Gastrocnemius medialis (tissue), 4 donors: ENCODE measurements at regions of chr2 and their contacts with region 1.

Region 1: DNA sequence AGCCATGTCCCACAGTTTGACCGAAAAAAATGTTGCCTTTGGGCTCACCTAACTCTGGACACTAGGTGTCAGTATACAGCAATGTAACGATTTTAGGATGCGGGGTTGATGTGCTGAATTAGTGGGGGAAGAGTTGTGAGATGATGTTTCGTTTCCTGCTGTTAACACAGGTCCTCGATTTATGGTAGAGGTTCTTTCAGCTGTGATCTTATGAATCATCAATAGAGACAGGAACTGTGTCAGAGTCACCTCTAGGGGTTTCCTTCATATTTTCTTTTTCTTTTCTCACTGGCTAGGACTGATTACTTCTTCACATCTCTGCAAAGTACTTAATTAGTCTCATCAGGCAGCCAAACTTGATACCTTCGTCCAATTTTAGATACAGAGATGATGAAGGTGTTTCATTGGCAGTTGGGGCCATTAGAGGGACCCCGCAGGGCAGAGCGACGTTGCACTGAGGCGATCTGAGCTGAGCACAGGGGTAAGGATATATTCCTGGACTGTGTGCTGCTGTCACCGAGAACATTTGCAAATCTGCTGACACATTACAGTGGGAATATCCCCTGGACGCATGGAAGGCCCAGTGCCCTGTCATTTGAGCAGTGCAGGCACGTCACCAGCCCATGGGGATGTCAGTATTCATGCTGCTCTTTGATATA is 10.2 kb upstream of the MMADHC start:
- DNase-seq: peak in 1 of 2 donors; percentile 23
- ATAC-seq: peak; percentile 92 to 96
- H3K4me3 ChIP-seq: peak overlapping the region; percentile 6 to 36 (median 26)
- H3K27ac ChIP-seq: peak overlapping the region in 1 of 4 donors; percentile 21
- H3K4me1 ChIP-seq: peaks cover 4 to 5% of the 10 kb centered on the region in 2 donors
- H3K27me3 ChIP-seq: no peaks in the 10 kb centered on the region
- CTCF ChIP-seq: peak; percentile 59 to 78 (median 73)
- POLR2A ChIP-seq: no peak

Region 2: GRCh38 chr2:149629026-149629425 is 31.2 kb after region 1 on chr2:
- in situ Hi-C with region 1: no loop called
- intact Hi-C with region 1: no loop called
- DNase-seq: no peak
- ATAC-seq: no peak
- H3K4me3 ChIP-seq: no peak overlapping the region
- H3K27ac ChIP-seq: no peak overlapping the region
- H3K4me1 ChIP-seq: no peaks in the 10 kb centered on the region
- H3K27me3 ChIP-seq: no peaks in the 10 kb centered on the region
- CTCF ChIP-seq: no peak
- POLR2A ChIP-seq: no peak

Region 3: GRCh38 chr2:149767516-149767974 is 169.7 kb after region 1 on chr2:
- in situ Hi-C with region 1: loop called in 1 of 4 experiments (anchors 10 kb)
- intact Hi-C with region 1: loop called (anchors 10 kb)
- DNase-seq: no peak
- ATAC-seq: no peak
- H3K4me3 ChIP-seq: no peak overlapping the region
- H3K27ac ChIP-seq: no peak overlapping the region
- H3K4me1 ChIP-seq: no peaks in the 10 kb centered on the region
- H3K27me3 ChIP-seq: no peaks in the 10 kb centered on the region
- CTCF ChIP-seq: no peak
- POLR2A ChIP-seq: no peak

Region 4: GRCh38 chr2:150487537-150488429 is 890.0 kb after region 1 on chr2 and contains the start of gene RND3:
- in situ Hi-C with region 1: loop called (anchors 5 to 10 kb)
- intact Hi-C with region 1: loop called (anchors 1 kb)
- DNase-seq: peak; percentile 92 to 93
- ATAC-seq: peak; percentile 89 to 91
- H3K4me3 ChIP-seq: peak within 1 kb of the TSS; percentile 58 to 74 (median 68)
- H3K27ac ChIP-seq: peak within 1 kb of the TSS; percentile 74 to 82 (median 80)
- H3K4me1 ChIP-seq: peaks cover 12 to 14% of the 10 kb centered on the region in 2 donors
- H3K27me3 ChIP-seq: no peaks in the 10 kb centered on the region
- CTCF ChIP-seq: peak; percentile 47 to 82 (median 74)
- POLR2A ChIP-seq: peak; percentile 80 to 82
- total RNA-seq, gene RND3: 2.1 to 14.9 (median 12.3) TPM

Region 5: DNA sequence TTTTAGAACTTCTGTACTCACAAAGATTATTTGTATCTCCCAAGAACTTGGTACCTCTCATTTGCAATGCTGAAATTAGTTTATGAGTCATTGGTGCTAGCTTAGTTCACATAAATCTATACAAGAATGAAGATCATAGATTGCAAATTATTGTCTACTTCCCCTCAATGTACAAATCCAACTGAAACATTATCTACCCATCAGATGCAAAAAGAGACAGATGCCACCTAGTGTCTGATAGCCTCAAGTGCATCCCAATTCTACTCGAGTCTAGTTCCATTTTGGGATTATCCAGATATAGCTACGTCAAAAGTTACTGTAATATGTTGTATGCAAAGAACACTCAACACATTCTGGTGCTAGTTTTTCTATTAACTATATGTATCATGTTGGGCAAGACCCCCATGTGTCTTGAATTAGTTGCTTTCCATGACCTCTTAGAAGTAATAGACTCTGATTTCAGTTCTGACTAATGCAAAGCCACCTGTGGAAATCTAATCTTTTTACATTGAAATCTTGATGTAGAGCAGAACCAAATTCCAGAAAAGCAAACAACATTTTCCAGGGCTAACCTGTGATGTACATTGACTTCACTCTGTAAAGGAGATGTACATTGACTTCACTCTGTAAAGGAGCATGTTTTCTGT is 1453.9 kb after region 1 on chr2:
- in situ Hi-C with region 1: loop called in 3 of 4 experiments (anchors 10 to 25 kb)
- intact Hi-C with region 1: loop called (anchors 5 kb)
- DNase-seq: no peak
- ATAC-seq: no peak
- H3K4me3 ChIP-seq: no peak overlapping the region
- H3K27ac ChIP-seq: no peak overlapping the region
- H3K4me1 ChIP-seq: no peaks in the 10 kb centered on the region
- H3K27me3 ChIP-seq: no peaks in the 10 kb centered on the region
- CTCF ChIP-seq: peak in 4 of 5 experiments; percentile 21 to 54 (median 41)
- POLR2A ChIP-seq: no peak

Region 6: DNA sequence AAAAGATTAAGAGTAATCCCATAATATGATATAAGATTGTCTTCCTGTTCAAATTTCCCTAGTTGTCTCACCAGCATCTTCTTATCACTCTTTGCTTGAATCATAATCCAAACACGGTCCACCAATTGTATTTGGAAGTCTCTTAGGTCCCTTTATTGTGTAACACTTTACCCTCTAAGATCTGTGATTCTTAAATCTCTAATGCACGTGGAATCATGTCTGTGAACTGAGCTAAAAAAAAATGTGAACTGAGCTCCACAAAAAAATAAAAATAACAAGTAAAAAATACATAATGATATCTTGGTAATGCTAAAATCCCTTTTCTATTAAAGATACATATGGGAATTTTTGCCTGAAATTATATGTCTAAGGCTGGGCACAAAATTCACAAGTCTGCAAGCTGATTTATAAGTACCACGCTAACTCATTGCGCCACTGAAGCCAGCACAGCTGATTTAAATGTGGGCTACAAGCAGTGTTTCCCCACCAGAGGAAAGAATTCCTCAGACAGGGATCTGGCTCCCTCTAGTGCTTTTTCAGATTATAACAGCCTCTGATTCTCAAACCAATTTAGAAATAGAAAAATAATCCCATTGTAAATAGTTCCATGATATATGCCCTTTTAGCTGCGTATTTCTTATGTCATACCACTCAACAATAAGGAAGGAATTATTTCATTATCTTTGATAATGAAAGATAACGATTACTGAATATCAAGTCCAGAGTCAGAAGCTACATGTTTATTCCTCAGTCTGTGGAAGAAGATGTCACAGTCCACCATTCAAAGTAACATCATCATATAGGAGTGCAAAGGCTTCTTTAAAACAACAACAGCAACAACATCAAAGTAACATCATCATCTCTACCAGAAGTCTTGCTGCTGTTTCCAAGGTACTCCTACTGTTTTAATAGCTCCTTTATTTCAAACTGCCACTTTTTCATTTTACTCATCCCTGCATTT is 1641.0 kb after region 1 on chr2:
- in situ Hi-C with region 1: loop called (anchors 5 to 10 kb)
- intact Hi-C with region 1: loop called (anchors 2 kb)
- DNase-seq: peak; percentile 14 to 43
- ATAC-seq: peak; percentile 73 to 89
- H3K4me3 ChIP-seq: no peak overlapping the region
- H3K27ac ChIP-seq: no peak overlapping the region
- H3K4me1 ChIP-seq: no peaks in the 10 kb centered on the region
- H3K27me3 ChIP-seq: no peaks in the 10 kb centered on the region
- CTCF ChIP-seq: peak; percentile 56 to 88 (median 79)
- POLR2A ChIP-seq: no peak

Region 7: GRCh38 chr2:151409601-151410484 is 1812.0 kb after region 1 on chr2 and contains the start of gene RIF1:
- in situ Hi-C with region 1: loop called in 2 of 4 experiments (anchors 25 kb)
- intact Hi-C with region 1: no loop called
- DNase-seq: peak; percentile 78 to 83
- ATAC-seq: peak; percentile 95 to 97
- H3K4me3 ChIP-seq: peak within 1 kb of the TSS; percentile 81 to 93 (median 87)
- H3K27ac ChIP-seq: peak within 1 kb of the TSS; percentile 90 to 95 (median 95)
- H3K4me1 ChIP-seq: peaks cover 7 to 12% of the 10 kb centered on the region in 2 donors
- H3K27me3 ChIP-seq: no peaks in the 10 kb centered on the region
- CTCF ChIP-seq: peak; percentile 61 to 83 (median 82)
- POLR2A ChIP-seq: no peak
- total RNA-seq, gene RIF1: 22.6 to 28.7 (median 25.7) TPM

Region 8: DNA sequence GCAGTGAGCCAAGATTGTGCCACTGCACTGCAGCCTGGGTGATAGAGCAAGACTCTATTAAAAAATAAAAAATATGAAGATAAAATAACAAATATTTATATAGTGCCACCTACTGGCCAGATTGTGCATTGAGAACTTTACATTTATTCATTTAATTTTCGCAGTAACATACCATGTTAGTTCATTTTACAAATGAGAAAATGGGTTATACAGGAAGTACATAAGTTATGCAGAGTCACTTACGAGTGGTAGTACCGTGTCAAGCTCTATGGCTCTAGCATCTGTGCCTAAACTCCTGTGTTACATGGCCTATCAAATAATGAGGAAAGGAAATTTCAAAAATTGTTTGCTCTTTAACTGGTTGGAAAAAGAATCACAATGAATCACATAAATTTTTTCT is 1839.8 kb after region 1 on chr2:
- in situ Hi-C with region 1: loop called in 1 of 4 experiments (anchors 25 kb)
- intact Hi-C with region 1: no loop called
- DNase-seq: no peak
- ATAC-seq: no peak
- H3K4me3 ChIP-seq: no peak overlapping the region
- H3K27ac ChIP-seq: no peak overlapping the region
- H3K4me1 ChIP-seq: no peaks in the 10 kb centered on the region
- H3K27me3 ChIP-seq: no peaks in the 10 kb centered on the region
- CTCF ChIP-seq: peak; percentile 29 to 75 (median 46)
- POLR2A ChIP-seq: no peak